ENCODE measurements at regions of chr10 and their contacts with region 1.

Region 1: GRCh38 chr10:123994417-123995081 is 98.8 kb downstream of the CHST15 start:
- DNase-seq: peak; percentile 62 to 67 (median 62)
- H3K4me3 ChIP-seq: peak overlapping the region in 5 of 7 experiments; percentile 19 to 66 (median 48)
- H3K27ac ChIP-seq: no peak overlapping the region
- H3K4me1 ChIP-seq: peaks cover 0 to 21% (median 9%) of the 10 kb centered on the region in 4 experiments
- H3K27me3 ChIP-seq: peaks cover 8 to 61% (median 13%) of the 10 kb centered on the region in 5 experiments

Region 2: DNA sequence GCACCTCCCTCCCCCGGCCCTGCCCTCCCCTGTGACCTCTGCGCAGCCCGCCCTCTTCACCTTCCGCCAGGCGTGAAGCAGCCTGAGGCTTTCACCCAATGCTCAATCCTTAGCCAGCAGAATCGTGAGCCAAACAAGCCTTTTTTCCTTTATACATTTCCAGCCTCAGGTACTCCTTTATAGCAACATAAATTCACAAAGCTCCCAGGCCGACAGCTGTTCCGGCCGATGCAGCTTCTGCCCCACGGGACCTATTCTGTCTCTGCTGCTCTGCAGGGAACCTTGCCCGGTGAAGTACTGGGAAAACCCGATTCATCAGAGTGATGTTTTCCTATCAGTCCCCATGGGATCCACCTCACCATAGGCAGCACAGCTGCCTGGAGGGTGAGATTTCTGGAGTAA is 11.4 kb after region 1 on chr10:
- CTCF ChIA-PET with region 1: interaction called, 11 read pairs
- POLR2A ChIA-PET with region 1: no interaction called
- DNase-seq: no peak
- H3K4me3 ChIP-seq: no peak overlapping the region
- H3K27ac ChIP-seq: no peak overlapping the region
- H3K4me1 ChIP-seq: no peaks in the 10 kb centered on the region
- H3K27me3 ChIP-seq: peaks cover 0 to 6% (median 0%) of the 10 kb centered on the region in 5 experiments

Region 3: DNA sequence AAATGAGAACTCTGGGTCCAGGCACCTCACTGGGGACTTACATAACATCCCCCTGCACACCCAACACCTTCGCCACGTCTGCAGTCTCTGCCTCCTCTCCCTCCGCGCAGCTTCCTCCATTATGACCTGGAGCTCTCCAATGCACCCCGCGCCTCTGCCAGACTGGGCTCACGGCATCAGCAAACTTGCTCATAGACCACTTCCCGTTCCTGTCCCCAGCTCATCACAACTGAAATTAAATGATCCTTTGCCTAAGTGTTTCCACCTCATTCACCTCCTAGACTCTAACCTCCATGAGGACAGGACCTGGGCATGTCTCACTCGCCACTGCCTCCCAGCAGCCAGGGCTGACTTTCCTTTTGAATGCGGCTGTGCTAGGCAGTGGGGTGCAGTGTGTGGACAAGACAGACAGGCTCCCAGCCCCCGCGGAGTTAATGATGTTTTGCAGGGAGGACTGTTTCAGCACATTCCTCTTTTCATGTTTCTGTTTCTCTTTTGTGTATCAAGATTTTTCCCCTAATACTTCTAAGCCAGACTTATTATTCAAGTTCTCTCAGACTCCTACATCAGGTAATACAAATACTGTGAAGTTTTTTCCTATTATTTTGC is 80.1 kb after region 1 on chr10:
- CTCF ChIA-PET with region 1: no interaction called
- POLR2A ChIA-PET with region 1: no interaction called
- DNase-seq: peak; percentile 21 to 76 (median 68)
- H3K4me3 ChIP-seq: no peak overlapping the region
- H3K27ac ChIP-seq: no peak overlapping the region
- H3K4me1 ChIP-seq: peaks cover 0 to 10% (median 5%) of the 10 kb centered on the region in 4 experiments
- H3K27me3 ChIP-seq: peaks cover 0 to 5% (median 0%) of the 10 kb centered on the region in 5 experiments

Region 4: GRCh38 chr10:124306922-124307371 is 312.4 kb after region 1 on chr10:
- CTCF ChIA-PET with region 1: no interaction called
- POLR2A ChIA-PET with region 1: no interaction called
- DNase-seq: peak in 2 of 3 donors; percentile 20 to 24
- H3K4me3 ChIP-seq: no peak overlapping the region
- H3K27ac ChIP-seq: no peak overlapping the region
- H3K4me1 ChIP-seq: no peaks in the 10 kb centered on the region
- H3K27me3 ChIP-seq: peaks cover 0 to 1% (median 0%) of the 10 kb centered on the region in 5 experiments

Measured in common myeloid progenitor, CD34-positive (primary cell).